HEK293 (cell line): ENCODE measurements at regions of chr6 and their contacts with region 1.

Region 1: DNA sequence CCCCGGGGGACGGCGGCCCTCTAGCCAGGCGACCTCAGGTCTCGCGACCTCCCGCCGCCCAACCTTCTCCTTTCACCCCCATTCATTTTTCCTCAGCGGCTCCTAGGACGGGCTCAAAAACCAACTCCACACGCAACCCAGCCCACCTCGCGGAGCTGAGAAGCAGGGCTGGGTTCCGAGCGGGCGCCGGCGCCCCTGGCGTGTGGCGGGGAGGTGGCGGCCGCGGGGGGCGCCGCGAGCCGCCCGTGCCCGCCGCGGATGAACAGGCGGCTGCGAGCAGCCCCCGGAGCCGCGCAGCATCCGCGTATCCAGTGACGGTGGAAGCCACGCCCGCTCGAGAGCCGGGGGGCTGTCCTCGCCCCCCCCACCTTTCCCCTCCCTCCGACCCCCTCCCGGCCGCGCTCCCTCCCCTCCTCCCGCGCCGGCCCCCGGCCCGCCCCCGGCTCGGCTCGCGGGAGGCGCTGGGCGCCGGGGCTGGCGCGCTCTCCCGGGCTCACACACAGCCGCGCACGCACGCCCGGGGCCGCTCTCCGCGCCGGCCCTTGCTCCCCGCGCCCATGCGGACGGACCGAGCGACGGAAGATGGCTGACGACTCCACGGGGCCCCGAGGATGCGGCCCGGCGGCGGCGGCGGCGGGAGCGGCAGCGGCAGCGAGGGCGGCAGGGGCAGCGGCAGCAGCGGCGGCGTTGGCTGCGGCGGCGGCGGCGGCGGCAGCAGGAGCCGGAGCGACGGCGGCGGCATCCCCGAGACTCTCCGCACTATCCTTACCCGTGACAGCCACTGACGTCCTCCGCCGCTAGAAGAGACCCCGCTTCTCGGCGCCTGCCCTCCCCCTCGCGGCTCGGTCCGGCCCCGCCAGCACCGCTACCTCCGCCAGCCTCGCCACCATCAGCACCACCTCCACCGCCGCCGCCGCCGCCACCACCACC is at the start of gene SOBP:
- H3K4me3 ChIP-seq: peak within 1 kb of the TSS; percentile 88
- H3K27ac ChIP-seq: peak within 1 kb of the TSS; percentile 94
- H3K4me1 ChIP-seq: peaks cover 29% of the 10 kb centered on the region
- CTCF ChIP-seq: 0 out of 2 replicates have a peak, but pooled peaks have one; percentile 17

Region 2: GRCh38 chr6:107144014-107144413 is 345.9 kb before region 1 on chr6:
- CTCF ChIA-PET with region 1: no interaction called
- POLR2A ChIA-PET with region 1: interaction called, 15 read pairs
- H3K4me3 ChIP-seq: no peak overlapping the region
- H3K27ac ChIP-seq: no peak overlapping the region
- H3K4me1 ChIP-seq: peaks cover 3% of the 10 kb centered on the region; the same call in 1 of the 2 replicates
- CTCF ChIP-seq: no peak

Region 3: DNA sequence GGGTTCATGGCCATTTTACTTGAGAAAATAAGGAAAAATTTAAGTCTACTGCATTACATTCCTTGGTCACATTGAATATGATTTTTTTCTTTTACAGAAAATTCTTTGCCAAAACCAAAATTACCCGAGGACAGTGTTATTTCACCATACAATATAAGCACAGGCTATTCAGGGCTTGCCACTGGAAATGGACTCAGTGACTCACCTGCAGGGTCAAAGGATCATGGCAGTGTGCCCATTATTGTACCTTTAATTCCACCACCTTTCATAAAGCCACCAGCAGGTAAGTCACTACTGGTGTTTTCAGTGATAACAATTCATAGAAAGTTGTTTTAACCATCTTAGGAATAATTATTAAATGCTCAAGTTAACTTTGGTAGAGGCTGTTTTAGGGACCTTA is 16.2 kb after region 1 on chr6:
- CTCF ChIA-PET with region 1: interaction called, 11 read pairs
- POLR2A ChIA-PET with region 1: interaction called, 20 read pairs
- H3K4me3 ChIP-seq: no peak overlapping the region
- H3K27ac ChIP-seq: no peak overlapping the region
- H3K4me1 ChIP-seq: peaks cover 32% of the 10 kb centered on the region
- CTCF ChIP-seq: no peak